Posterior vena cava (tissue), 2 donors: ENCODE measurements at regions of chr5 and their contacts with region 1.

Region 1: DNA sequence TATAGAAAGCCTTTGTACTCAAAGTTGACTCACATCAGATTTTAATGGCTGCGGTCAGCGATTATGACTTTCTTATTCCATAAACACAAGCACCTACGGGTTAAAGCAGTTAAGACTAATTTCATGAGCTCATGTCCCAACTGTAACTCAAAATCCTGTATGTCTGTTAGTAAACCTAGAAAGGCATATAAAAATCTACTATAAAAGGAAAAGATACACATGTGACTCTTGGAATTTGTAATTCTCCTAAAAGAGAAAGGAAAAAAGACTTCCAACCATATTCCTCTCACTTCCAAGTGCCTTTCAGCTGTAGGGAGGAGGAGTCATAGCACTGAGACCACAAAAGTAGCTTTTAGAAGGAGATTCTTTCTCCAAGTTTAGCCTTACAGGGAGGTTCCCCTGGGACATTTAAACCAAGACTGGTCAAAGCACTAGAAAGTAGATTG is 129.1 kb downstream of the EBF1 start:
- DNase-seq: no peak

Region 2: GRCh38 chr5:158938200-158938599 is 32.4 kb before region 1 on chr5:
- intact Hi-C with region 1: no loop called
- DNase-seq: no peak

Region 3: DNA sequence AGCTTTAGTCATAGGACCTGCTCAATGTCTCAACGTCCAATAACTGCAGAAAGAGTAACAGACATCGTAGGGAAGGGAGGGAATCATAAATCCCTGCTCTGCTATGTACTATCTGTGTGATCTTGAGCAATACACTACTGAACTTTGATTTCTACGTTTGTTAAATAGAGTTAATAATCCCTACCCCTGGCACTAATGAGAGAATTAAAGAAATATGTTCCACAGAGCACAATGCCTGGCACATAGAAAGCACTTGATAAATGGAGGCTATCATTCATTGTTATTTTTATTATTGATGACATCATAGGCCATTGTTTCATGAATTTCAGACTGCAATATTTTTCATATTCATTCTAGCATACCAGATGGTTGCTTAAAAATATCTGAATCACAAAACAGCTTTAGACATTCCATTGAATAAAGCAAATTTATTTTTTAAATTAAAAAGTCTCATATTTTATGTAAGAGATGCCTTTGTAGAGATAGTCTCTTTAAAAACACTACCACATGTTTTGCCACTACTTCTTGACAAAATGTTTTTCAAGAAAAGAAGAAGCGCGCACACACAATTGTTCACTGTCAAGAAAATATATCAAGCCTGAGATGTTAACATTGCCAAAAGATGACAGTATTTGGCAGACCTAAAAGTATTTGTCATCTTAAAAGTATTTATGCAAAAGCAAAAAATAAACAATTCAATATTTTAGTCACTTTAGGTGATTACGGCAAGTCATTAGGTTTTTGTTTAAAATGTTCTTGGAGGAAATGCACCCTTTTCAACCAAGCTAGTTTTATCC is 20.6 kb after region 1 on chr5:
- intact Hi-C with region 1: loop called in 1 of 2 experiments (anchors 1 kb)
- DNase-seq: no peak